Activated CD4-positive, alpha-beta memory T cell treated with anti-CD3 and anti-CD28 coated beads for 36 hours (primary cell): ENCODE measurements at regions of chr14 and their contacts with region 1.

Region 1: GRCh38 chr14:101761032-101761880 is at the start of gene PPP2R5C:
- DNase-seq: peak; percentile 91
- H3K4me3 Mint-ChIP-seq: peak within 1 kb of the TSS; percentile 87
- H3K27ac Mint-ChIP-seq: peak within 1 kb of the TSS; percentile 75
- H3K4me1 Mint-ChIP-seq: peaks cover 46% of the 10 kb centered on the region
- H3K27me3 Mint-ChIP-seq: no peaks in the 10 kb centered on the region
- total RNA-seq, gene PPP2R5C: 252 to 268 TPM

Region 2: GRCh38 chr14:101721951-101722661 is 39.1 kb before region 1 on chr14:
- CTCF ChIA-PET with region 1: interaction called, 3 read pairs
- POLR2A ChIA-PET with region 1: interaction called, 5 read pairs
- intact Hi-C with region 1: loop called (anchors 2 kb)
- DNase-seq: peak; percentile 86
- H3K4me3 Mint-ChIP-seq: peak overlapping the region; percentile 77
- H3K27ac Mint-ChIP-seq: peak overlapping the region; percentile 99
- H3K4me1 Mint-ChIP-seq: peaks cover 45% of the 10 kb centered on the region
- H3K27me3 Mint-ChIP-seq: no peaks in the 10 kb centered on the region

Region 3: GRCh38 chr14:101809671-101810514 is 48.6 kb after region 1 on chr14:
- CTCF ChIA-PET with region 1: interaction called, 3 read pairs
- POLR2A ChIA-PET with region 1: interaction called, 7 read pairs
- intact Hi-C with region 1: loop called (anchors 2 kb)
- DNase-seq: peak; percentile 91
- H3K4me3 Mint-ChIP-seq: peak overlapping the region; percentile 86
- H3K27ac Mint-ChIP-seq: peak overlapping the region; percentile 98
- H3K4me1 Mint-ChIP-seq: peaks cover 49% of the 10 kb centered on the region
- H3K27me3 Mint-ChIP-seq: no peaks in the 10 kb centered on the region

Region 4: DNA sequence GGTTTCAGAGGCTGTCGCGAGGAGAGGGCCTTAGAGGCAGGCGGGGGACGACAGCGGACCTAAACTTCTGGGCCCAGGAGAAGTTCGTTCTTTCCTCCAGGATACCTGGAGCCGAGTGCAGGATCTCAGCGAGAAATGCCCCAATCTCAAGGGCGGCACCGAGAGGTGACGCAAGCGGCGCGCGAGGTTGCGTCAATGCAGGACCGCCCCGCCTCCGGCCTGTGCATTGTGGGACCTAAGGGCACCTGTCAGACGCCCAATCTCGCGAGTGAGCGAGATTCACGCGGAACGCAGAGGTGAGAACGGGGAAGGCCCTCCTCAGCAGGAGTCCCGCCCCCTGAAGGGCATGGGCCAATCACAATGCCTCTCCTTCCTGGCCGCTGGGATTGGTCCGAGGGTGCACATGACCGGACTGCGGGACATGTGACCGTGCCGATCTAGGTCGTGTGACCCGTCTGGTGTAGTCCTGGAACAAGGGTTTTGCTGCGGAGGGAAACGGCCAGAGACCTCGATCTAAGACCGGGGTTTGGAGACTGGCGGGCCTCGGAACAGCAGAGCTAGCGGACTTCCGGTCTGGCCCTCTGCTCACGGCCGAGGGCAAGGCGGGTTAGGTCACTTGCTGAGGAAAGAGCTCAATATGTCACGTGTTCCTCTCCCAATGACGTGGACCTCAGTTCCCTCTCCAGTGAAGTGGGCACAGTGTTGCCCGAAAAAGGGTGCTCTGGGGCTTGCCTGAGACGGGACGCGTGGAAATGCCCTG is 186.8 kb after region 1 on chr14:
- CTCF ChIA-PET with region 1: no interaction called
- POLR2A ChIA-PET with region 1: interaction called, 3 read pairs
- intact Hi-C with region 1: loop called (anchors 1 kb)
- DNase-seq: peak; percentile 100
- H3K4me3 Mint-ChIP-seq: peak overlapping the region; percentile 92
- H3K27ac Mint-ChIP-seq: peak overlapping the region; percentile 95
- H3K4me1 Mint-ChIP-seq: peaks cover 15% of the 10 kb centered on the region
- H3K27me3 Mint-ChIP-seq: peaks cover 20% of the 10 kb centered on the region

Region 5: GRCh38 chr14:103333754-103334643 is 1572.7 kb after region 1 on chr14 and contains the start of gene EIF5:
- CTCF ChIA-PET with region 1: no interaction called
- POLR2A ChIA-PET with region 1: no interaction called
- intact Hi-C with region 1: loop called (anchors 5 kb)
- DNase-seq: peak; percentile 99
- H3K4me3 Mint-ChIP-seq: peak within 1 kb of the TSS; percentile 88
- H3K27ac Mint-ChIP-seq: peak within 1 kb of the TSS; percentile 96
- H3K4me1 Mint-ChIP-seq: peaks cover 47% of the 10 kb centered on the region
- H3K27me3 Mint-ChIP-seq: peaks cover 1% of the 10 kb centered on the region
- total RNA-seq, gene EIF5: 192 to 196 TPM